Endothelial cell of umbilical vein (primary cell): ENCODE measurements at regions of chr1 and their contacts with region 1.

Region 1: DNA sequence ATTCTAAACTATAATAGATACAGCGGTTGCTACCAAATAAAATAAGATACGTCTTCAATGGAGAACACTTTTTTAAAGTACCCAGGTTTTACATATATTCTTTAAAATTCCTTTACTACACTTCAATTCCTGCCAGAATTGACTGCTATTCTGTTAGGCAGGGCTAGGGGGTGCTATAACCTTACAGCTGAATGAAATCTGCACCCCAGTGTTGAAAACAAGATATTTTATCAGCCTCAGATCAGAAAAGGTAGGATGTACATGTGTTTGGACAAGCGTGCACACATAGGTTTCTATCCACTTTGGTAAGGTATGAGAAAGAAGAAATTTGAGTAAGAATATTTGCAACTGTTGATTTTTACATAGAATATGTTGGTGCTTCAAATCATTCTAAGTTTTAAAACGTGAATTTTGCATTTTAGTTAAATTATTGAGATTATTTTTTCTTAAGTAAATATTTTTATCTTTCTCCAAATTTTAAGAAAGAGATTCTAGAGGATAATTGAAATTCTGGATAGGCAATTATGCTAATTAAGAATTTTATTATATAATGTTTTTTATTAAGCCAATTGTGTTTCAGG is 490.8 kb upstream of the ADGRL4 start:
- DNase-seq: peak; percentile 49
- H3K4me3 ChIP-seq: no peak overlapping the region
- H3K27ac ChIP-seq: no peak overlapping the region
- H3K4me1 ChIP-seq: no peaks in the 10 kb centered on the region
- H3K27me3 ChIP-seq: no peaks in the 10 kb centered on the region
- CTCF ChIP-seq: peak; percentile 77 to 81
- POLR2A ChIP-seq: no peak

Region 2: GRCh38 chr1:79259388-79260336 is 237.6 kb before region 1 on chr1:
- CTCF ChIA-PET with region 1: interaction called, 7 read pairs
- POLR2A ChIA-PET with region 1: no interaction called
- dilution Hi-C with region 1: no loop called
- intact Hi-C with region 1: loop called (anchors 10 kb)
- DNase-seq: peak; percentile 44
- H3K4me3 ChIP-seq: no peak overlapping the region
- H3K27ac ChIP-seq: no peak overlapping the region
- H3K4me1 ChIP-seq: no peaks in the 10 kb centered on the region
- H3K27me3 ChIP-seq: no peaks in the 10 kb centered on the region
- CTCF ChIP-seq: peak; percentile 27 to 42
- POLR2A ChIP-seq: no peak

Region 3: GRCh38 chr1:80218112-80218511 is 720.8 kb after region 1 on chr1:
- CTCF ChIA-PET with region 1: interaction called, 18 read pairs
- POLR2A ChIA-PET with region 1: no interaction called
- dilution Hi-C with region 1: no loop called
- intact Hi-C with region 1: loop called (anchors 1 kb)
- DNase-seq: peak; percentile 51
- H3K4me3 ChIP-seq: no peak overlapping the region
- H3K27ac ChIP-seq: no peak overlapping the region
- H3K4me1 ChIP-seq: no peaks in the 10 kb centered on the region
- H3K27me3 ChIP-seq: no peaks in the 10 kb centered on the region
- CTCF ChIP-seq: peak; percentile 30 to 43
- POLR2A ChIP-seq: no peak